ENCODE measurements at regions of chr4 and their contacts with region 1.

Region 1: GRCh38 chr4:169619959-169620879 is at the start of gene CLCN3:
- DNase-seq: peak; percentile 99
- ATAC-seq: peak; percentile 100
- H3K4me3 ChIP-seq: peak within 1 kb of the TSS; percentile 77
- H3K27ac ChIP-seq: peak within 1 kb of the TSS; percentile 92
- H3K4me1 ChIP-seq: no peaks in the 10 kb centered on the region
- H3K27me3 ChIP-seq: no peaks in the 10 kb centered on the region
- total RNA-seq, gene CLCN3: 45.1 to 51.3 (median 49.3) TPM

Region 2: DNA sequence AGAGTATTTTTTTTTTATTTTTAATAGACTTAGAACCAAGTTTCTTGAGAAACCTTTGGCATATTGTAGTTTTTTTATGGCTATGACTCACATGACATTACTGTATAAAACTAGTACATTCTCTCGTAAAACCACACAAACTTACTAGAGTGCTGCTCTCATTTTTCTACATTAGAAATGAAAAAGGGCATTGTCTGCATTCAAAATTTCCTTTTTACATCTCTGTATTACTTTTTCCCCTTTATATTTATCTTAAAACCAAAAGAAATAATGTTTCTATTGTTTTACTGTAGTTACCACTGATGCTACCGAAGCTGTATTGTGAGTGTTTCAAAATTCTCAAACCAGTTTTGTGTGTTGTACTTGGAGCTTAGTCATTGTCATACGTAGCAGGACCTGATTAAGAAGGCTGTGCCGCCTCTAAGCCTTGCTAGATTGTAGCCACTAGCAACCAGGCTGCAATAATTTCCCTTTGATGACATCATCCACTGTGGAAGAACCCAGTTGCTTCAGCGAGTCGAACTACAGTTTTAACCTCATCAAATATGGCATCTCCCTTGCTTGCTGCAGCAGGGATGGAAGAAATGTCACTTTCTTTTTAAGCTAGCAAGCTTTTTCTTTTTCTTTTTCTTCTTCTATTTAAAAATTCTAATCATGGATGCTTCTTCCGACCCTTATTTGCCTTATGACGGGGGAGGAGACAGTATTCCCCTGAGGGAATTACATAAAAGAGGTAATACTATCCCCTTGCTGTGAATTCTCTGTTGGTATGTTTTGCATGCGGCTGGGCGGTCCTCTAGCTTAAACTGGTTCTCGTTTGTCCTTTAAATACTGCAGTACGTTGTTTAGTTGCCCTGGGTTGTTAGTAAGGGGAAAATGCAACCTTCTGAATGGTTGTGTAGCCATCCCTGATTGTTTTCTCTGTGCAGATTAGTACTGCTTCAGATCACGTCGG is 39.8 kb after region 1 on chr4:
- intact Hi-C with region 1: loop called in 3 of 4 experiments (anchors 5 kb)
- DNase-seq: peak; percentile 64 to 83 (median 73)
- ATAC-seq: peak; percentile 98 to 100
- H3K4me3 ChIP-seq: peak overlapping the region; percentile 86
- H3K27ac ChIP-seq: peak overlapping the region; percentile 96
- H3K4me1 ChIP-seq: peaks cover 6% of the 10 kb centered on the region
- H3K27me3 ChIP-seq: no peaks in the 10 kb centered on the region

Region 3: DNA sequence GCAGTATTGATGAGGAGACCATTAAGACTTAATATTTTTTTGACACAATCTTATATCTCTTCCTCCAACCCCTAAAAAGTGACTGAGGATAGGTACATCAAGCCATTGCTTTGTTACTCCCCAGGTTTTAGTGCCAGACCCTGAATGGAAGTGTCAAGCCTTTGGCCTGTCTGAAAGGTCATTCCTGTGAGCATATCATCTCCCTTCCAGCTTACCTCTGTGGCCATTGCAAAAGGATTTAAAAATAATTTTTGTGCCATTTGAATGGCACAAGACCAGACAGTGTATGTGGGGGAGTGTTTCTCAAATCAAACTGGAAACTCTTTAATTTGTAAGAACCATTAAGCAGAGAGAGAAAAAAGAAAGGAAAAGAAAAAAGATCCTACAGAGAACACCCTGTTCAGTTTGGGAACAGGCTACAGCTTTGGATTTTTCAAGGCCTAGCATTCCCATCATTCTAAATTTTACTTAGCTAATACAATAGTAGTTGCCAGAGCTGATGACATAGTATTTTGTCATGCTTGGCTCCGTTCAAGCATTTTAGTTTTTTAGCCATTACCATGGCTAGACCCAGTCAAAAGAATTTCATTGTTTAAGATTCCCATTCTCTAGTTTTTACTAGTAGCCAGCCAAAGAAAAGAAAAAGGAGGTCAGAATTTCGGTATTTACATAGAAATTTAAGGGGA is 87.9 kb after region 1 on chr4:
- intact Hi-C with region 1: loop called in 1 of 4 experiments (anchors 5 kb)
- DNase-seq: no peak
- ATAC-seq: peak; percentile 43 to 46
- H3K4me3 ChIP-seq: no peak overlapping the region
- H3K27ac ChIP-seq: no peak overlapping the region
- H3K4me1 ChIP-seq: no peaks in the 10 kb centered on the region
- H3K27me3 ChIP-seq: no peaks in the 10 kb centered on the region